ENCODE measurements at regions of chr10 and their contacts with region 1.

Region 1: GRCh38 chr10:76492026-76492425 is 1060.6 kb downstream of the LRMDA start:
- DNase-seq: no peak
- H3K4me3 ChIP-seq: no peak overlapping the region
- H3K27ac ChIP-seq: peak overlapping the region; percentile 81
- H3K4me1 ChIP-seq: peaks cover 0 to 2% of the 10 kb centered on the region in 2 donors
- H3K27me3 ChIP-seq: no peaks in the 10 kb centered on the region
- CTCF ChIP-seq: no peak

Region 2: GRCh38 chr10:76388321-76389023 is 103.6 kb before region 1 on chr10:
- intact Hi-C with region 1: no loop called
- DNase-seq: no peak
- H3K4me3 ChIP-seq: no peak overlapping the region
- H3K27ac ChIP-seq: no peak overlapping the region
- H3K4me1 ChIP-seq: no peaks in the 10 kb centered on the region
- H3K27me3 ChIP-seq: no peaks in the 10 kb centered on the region
- CTCF ChIP-seq: no peak

Region 3: DNA sequence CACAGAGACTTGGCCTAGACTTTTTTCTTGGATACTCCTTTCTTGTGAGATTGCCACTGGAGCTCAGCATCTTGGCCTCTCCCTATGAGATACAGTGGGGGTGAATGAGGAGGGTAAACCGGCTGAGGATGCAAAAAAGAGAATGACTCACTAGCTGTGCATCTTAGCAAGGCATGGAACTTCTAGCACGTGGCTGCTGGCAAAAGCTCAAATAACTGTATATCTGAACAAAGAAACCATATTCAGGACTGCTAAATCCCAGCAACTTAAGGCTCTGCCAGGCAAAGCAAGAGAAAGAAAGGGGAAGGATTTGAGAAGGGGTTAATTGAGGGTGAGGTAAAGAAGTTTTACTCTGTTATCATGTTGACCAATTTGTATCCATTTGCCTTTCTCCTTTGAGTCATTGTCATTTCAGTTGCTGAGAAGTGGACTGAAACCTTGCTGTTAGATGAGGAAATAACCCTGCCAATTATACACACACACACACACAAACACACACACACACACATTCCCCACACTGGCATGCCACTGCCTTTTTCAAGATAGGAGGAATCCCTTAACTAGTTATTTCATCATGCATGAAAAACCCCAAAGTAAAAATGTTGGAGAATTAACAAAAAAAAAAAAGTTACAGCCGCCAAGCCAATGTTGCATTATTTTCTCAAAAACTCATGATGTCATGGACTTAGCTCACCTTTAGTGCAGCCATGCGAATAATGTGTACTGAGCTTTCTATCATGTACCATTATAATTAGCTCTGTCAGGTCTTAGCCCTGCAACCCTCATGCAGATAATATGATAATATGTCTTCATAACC is 63.3 kb before region 1 on chr10:
- intact Hi-C with region 1: loop called (anchors 5 kb)
- DNase-seq: no peak
- H3K4me3 ChIP-seq: peak overlapping the region in 1 of 2 donors; percentile 41
- H3K27ac ChIP-seq: peak overlapping the region; percentile 86
- H3K4me1 ChIP-seq: peaks cover 10 to 42% of the 10 kb centered on the region in 2 donors
- H3K27me3 ChIP-seq: no peaks in the 10 kb centered on the region
- CTCF ChIP-seq: no peak

Measured in ascending aorta (tissue), 2 donors.